Heart left ventricle (tissue), 16 donors: ENCODE measurements at regions of chr2 and their contacts with region 1.

Region 1: DNA sequence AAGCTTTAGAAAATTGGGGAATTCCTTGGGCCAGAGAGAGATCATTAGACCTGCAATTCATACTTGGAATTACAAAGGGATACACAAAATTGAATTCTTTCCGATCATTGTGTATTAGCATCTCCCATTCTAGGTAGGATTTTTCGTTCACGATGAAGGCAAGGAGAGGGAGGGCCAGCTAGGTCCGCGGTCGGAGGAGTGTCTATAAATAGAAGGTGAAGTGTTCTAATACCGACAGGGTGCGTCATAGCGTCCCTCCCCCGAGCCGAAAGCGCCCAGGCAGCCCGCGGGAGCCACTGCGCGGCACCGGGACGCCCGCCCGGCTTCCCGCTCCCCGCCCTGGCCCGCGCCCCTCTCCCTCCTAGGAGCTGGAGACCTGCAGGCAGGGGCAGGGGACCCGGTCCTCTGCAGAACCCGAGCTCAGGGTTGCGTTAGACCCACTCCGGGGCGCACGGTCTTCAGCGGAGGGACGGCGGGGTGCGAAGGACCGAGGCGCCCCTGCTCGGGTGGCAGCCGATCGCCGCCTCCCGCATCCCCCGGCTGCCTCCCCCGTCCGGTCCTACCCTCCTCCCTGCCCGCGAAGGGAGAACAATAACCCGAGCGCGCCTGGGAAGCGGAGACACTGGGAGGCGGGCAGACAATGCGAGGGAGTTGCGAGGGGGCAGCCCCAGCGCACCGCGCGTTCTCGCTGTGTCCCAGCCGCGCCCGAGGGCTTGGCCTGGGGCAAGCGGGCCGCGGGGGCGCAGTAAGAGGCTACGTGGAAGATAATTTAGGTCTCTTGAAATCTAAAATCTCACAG is 114.2 kb upstream of the SERTAD2 start:
- DNase-seq: peak; percentile 93 to 95 (median 93)
- ATAC-seq: peak; percentile 94 to 97 (median 96)
- H3K4me3 ChIP-seq: peak overlapping the region; percentile 34 to 94 (median 77)
- H3K27ac ChIP-seq: peak overlapping the region; percentile 91 to 100 (median 98)
- H3K4me1 ChIP-seq: peaks cover 0 to 39% (median 21%) of the 10 kb centered on the region in 12 donors
- H3K27me3 ChIP-seq: no peaks in the 10 kb centered on the region
- CTCF ChIP-seq: peak in 6 of 12 donors; percentile 6 to 38 (median 16)
- POLR2A ChIP-seq: peak; percentile 38 to 93

Region 2: GRCh38 chr2:64831134-64831976 is 63.5 kb after region 1 on chr2:
- intact Hi-C with region 1: loop called in 4 of 10 experiments (anchors 1 to 10 kb)
- DNase-seq: peak; percentile 77 to 93 (median 88)
- ATAC-seq: peak; percentile 79 to 98 (median 97)
- H3K4me3 ChIP-seq: peak overlapping the region in 3 of 12 donors; percentile 2 to 37 (median 9)
- H3K27ac ChIP-seq: peak overlapping the region in 11 of 12 donors; percentile 31 to 90 (median 72)
- H3K4me1 ChIP-seq: peaks cover 0 to 18% (median 10%) of the 10 kb centered on the region in 12 donors
- H3K27me3 ChIP-seq: no peaks in the 10 kb centered on the region
- CTCF ChIP-seq: peak; percentile 83 to 95 (median 88)
- POLR2A ChIP-seq: no peak

Region 3: GRCh38 chr2:64859312-64860212 is 91.7 kb after region 1 on chr2:
- intact Hi-C with region 1: loop called in 7 of 10 experiments (anchors 2 to 5 kb)
- DNase-seq: peak; percentile 87 to 95 (median 93)
- ATAC-seq: peak; percentile 76 to 88 (median 84)
- H3K4me3 ChIP-seq: peak overlapping the region; percentile 0 to 62 (median 54)
- H3K27ac ChIP-seq: peak overlapping the region; percentile 90 to 99 (median 94)
- H3K4me1 ChIP-seq: peaks cover 13 to 87% (median 36%) of the 10 kb centered on the region in 12 donors
- H3K27me3 ChIP-seq: no peaks in the 10 kb centered on the region
- CTCF ChIP-seq: peak in 2 of 12 donors; percentile 6 to 14
- POLR2A ChIP-seq: peak in 1 of 2 donors; percentile 45

Region 4: GRCh38 chr2:64914735-64915509 is 147.1 kb after region 1 on chr2:
- intact Hi-C with region 1: no loop called
- DNase-seq: peak in 1 of 5 donors; percentile 41
- ATAC-seq: peak in 2 of 4 donors; percentile 14 to 56
- H3K4me3 ChIP-seq: no peak overlapping the region
- H3K27ac ChIP-seq: no peak overlapping the region
- H3K4me1 ChIP-seq: peaks cover 0 to 13% (median 4%) of the 10 kb centered on the region in 12 donors
- H3K27me3 ChIP-seq: no peaks in the 10 kb centered on the region
- CTCF ChIP-seq: no peak
- POLR2A ChIP-seq: no peak